ENCODE measurements at regions of chr11 and their contacts with region 1.

Region 1: DNA sequence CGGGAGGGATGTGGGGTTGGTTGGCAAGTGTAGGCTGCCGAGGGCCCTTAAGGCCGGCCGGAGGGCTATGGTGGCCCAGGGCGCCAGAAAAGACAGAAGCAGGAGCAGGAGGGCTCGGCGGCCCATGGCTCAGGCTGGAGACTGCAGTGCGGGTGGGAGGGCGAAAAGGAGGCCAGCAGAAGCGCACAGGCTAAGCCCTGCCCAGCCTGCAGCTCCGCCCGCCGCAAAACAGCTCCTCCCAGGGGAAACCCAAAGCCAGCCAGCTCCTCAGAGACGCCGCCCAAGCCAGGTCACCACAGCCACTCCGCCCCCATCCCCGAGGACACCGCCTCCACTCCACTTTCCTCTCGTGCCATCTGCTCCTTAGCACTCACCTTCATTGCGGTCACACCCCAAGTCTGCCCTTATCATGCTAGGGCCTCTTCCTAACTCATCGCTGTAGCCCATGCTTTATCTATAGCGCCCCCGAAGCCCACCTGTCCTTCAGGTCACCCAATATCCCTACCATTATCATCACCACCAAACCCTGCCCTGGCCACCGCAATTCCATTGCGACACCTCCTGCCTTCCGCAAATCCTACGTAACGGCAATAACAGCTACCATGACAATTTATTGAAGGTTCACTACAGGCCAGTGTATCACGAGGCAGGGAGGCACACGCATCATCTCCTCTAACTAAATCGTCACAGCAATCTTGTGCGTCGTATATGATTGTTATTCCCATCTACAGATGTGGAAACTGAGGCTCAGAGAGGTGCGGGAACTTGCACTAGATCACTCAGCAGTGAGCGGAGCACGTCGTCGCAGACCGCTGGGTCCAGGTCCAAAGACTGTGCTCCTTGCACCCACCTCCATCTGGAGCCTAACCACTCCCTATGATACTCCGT is at the start of gene PRCP:
- DNase-seq: peak; percentile 93 to 94
- ATAC-seq: peak; percentile 93 to 98 (median 96)
- H3K4me3 ChIP-seq: peak within 1 kb of the TSS; percentile 56 to 85 (median 75)
- H3K27ac ChIP-seq: peak within 1 kb of the TSS; percentile 68 to 94 (median 85)
- H3K4me1 ChIP-seq: peaks cover 7 to 50% (median 25%) of the 10 kb centered on the region in 9 donors
- H3K27me3 ChIP-seq: no peaks in the 10 kb centered on the region
- CTCF ChIP-seq: peak in 3 of 9 donors; percentile 8 to 18 (median 10)
- total RNA-seq, gene PRCP: 28.8 to 89.8 (median 41.4) TPM

Region 2: DNA sequence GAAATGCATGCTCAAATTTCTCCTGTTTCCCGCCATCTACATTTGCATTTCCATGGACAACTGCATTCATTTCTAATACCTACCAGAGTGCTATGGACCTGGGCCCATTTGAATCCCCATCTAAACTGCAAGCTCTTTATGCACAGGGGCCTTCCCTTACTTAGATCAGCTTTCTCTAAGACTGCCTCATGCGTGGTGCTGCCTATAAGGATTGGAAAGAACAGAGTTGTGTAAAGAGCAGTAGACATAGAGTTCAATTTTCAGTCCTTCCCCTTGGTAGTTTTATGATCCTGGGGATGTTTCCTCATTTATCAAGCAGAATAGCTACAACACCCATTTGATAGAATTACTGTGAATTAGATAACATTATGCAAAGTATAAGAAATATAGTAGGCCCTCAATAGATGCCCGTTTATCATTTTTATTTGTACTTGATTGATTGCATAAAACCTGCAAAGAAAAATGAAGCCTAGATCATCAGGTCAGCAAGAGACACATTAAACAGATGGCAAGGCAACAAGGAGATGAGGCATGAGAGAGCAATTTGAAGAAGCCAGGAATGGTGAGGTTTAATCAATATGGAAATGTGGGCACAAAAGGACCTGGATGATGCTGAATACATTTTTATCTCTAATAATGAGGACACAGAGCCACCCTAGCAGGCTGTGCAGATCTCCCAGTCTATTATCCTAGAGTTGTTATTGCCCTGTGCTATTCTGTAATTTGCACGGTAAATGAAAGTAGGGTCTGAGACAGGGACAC is 526.6 kb before region 1 on chr11:
- intact Hi-C with region 1: no loop called
- DNase-seq: no peak
- ATAC-seq: no peak
- H3K4me3 ChIP-seq: no peak overlapping the region
- H3K27ac ChIP-seq: no peak overlapping the region
- H3K4me1 ChIP-seq: no peaks in the 10 kb centered on the region
- H3K27me3 ChIP-seq: peaks cover 0 to 6% (median 0%) of the 10 kb centered on the region in 7 donors
- CTCF ChIP-seq: no peak

Region 3: DNA sequence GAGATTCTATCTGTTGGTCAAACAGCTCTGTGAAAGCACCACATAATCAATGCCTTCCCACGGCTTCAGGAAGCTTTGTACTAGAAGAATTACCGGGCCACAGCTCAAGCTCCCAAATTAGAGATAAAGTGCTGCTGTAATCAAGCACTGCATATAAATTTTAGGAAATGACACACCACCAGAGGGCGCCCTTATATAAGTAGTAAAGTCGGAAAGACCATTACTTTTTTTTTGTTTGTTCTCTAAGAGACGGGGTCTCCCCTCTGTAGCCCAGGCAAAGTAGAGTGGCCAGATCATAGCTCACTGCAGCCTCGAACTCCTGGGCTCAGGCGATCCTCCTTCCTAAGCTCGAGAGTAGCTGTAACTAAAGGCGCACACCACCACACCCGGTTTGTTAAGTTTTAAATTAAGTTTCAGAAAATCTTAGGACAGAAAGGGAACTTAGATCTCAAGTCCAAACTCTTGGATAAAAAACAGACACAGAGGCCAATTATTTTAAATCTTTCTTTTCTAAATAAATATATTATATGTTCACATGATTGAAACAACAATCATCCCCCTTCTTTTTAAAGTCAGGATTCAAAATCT is 32.9 kb before region 1 on chr11:
- intact Hi-C with region 1: loop called in 5 of 10 experiments (anchors 5 kb)
- DNase-seq: peak in 1 of 2 donors; percentile 89
- ATAC-seq: peak in 7 of 8 donors; percentile 22 to 74 (median 56)
- H3K4me3 ChIP-seq: peak overlapping the region in 6 of 10 donors; percentile 19 to 38 (median 32)
- H3K27ac ChIP-seq: peak overlapping the region in 2 of 10 donors; percentile 16 to 48
- H3K4me1 ChIP-seq: peaks cover 0 to 69% (median 29%) of the 10 kb centered on the region in 9 donors
- H3K27me3 ChIP-seq: no peaks in the 10 kb centered on the region
- CTCF ChIP-seq: peak; percentile 55 to 87 (median 74)

Region 4: GRCh38 chr11:83071567-83072349 is 171.2 kb after region 1 on chr11 and contains the start of gene RAB30:
- intact Hi-C with region 1: loop called in 6 of 10 experiments (anchors 5 to 10 kb)
- DNase-seq: peak; percentile 87 to 99
- ATAC-seq: peak; percentile 97 to 99 (median 98)
- H3K4me3 ChIP-seq: peak within 1 kb of the TSS; percentile 60 to 89 (median 74)
- H3K27ac ChIP-seq: peak within 1 kb of the TSS; percentile 71 to 95 (median 92)
- H3K4me1 ChIP-seq: peaks cover 2 to 65% (median 48%) of the 10 kb centered on the region in 9 donors
- H3K27me3 ChIP-seq: peaks cover 0 to 12% (median 0%) of the 10 kb centered on the region in 7 donors
- CTCF ChIP-seq: no peak
- total RNA-seq, gene RAB30: 20.2 to 29.4 (median 22.0) TPM

Region 5: DNA sequence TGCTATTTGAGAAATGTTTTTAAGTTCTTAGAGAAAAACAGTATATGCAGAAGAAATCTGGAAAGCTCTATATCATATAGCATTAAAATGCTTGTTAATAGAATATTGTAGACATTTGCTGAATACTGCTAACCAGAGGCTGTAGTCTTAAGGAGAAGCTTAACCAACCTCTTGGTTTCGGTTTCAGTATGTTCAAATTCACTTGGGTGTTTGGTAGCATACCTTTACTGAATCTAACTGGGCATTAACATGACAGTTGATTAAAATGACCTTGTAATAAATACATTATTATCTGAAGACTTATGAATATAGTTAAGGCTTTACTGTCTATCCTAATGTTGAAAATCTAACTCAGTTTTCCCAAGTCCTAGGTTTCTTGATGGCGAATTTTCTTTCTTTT is 261.9 kb after region 1 on chr11:
- intact Hi-C with region 1: loop called in 5 of 10 experiments (anchors 1 to 10 kb)
- DNase-seq: no peak
- ATAC-seq: no peak
- H3K4me3 ChIP-seq: peak overlapping the region in 1 of 10 donors; percentile 86
- H3K27ac ChIP-seq: peak overlapping the region in 3 of 10 donors; percentile 4 to 28 (median 22)
- H3K4me1 ChIP-seq: peaks cover 0 to 63% (median 44%) of the 10 kb centered on the region in 9 donors
- H3K27me3 ChIP-seq: no peaks in the 10 kb centered on the region
- CTCF ChIP-seq: no peak

Region 6: DNA sequence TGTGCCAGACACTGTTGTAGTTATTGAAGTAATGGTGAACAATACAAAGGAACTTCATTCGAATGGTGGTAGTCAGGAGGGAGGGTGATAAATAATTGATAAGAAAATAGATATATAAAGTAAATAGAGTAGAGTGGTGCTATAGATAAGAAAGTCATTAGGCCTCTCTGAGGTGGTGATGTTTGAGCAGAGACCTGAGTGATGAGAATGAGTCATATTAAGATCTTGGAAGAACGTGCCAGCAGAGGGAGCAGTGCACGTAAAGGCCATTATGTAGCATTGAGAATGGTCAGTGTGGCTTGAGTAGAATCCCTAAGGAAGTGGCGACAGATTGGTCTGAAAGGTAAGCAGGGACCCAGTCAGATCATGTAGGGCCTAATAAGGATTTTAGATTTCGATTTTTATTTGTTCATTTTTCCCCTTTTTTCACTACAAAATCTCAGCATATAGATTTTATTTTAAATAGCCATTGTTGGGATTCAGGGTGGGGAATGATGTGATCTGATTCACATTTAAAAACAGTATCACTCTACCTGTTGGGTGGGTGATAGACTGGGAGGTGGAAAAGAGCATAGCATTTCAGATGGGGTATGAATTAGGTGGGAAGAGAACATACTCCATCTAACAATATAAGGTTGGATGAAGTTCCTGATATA is 340.9 kb after region 1 on chr11:
- intact Hi-C with region 1: loop called in 2 of 10 experiments (anchors 5 to 10 kb)
- DNase-seq: peak in 1 of 2 donors; percentile 19
- ATAC-seq: peak in 4 of 8 donors; percentile 62 to 85 (median 74)
- H3K4me3 ChIP-seq: no peak overlapping the region
- H3K27ac ChIP-seq: no peak overlapping the region
- H3K4me1 ChIP-seq: peaks cover 0 to 3% (median 0%) of the 10 kb centered on the region in 9 donors
- H3K27me3 ChIP-seq: no peaks in the 10 kb centered on the region
- CTCF ChIP-seq: peak in 8 of 9 donors; percentile 16 to 65 (median 58)

Region 7: GRCh38 chr11:83285771-83286528 is 385.4 kb after region 1 on chr11 and contains the start of gene CCDC90B:
- intact Hi-C with region 1: loop called in 1 of 10 experiments (anchors 10 kb)
- DNase-seq: peak; percentile 91 to 97
- ATAC-seq: peak; percentile 97 to 99 (median 98)
- H3K4me3 ChIP-seq: peak within 1 kb of the TSS; percentile 56 to 90 (median 80)
- H3K27ac ChIP-seq: peak within 1 kb of the TSS; percentile 87 to 99 (median 96)
- H3K4me1 ChIP-seq: peaks cover 0 to 42% (median 35%) of the 10 kb centered on the region in 9 donors
- H3K27me3 ChIP-seq: no peaks in the 10 kb centered on the region
- CTCF ChIP-seq: peak in 4 of 9 donors; percentile 38 to 56 (median 47)
- total RNA-seq, gene CCDC90B: 22.3 to 34.3 (median 28.2) TPM

Region 8: GRCh38 chr11:83827940-83828554 is 927.5 kb after region 1 on chr11:
- intact Hi-C with region 1: loop called in 1 of 10 experiments (anchors 10 kb)
- DNase-seq: no peak
- ATAC-seq: peak in 2 of 8 donors; percentile 30 to 54
- H3K4me3 ChIP-seq: peak overlapping the region in 5 of 10 donors; percentile 8 to 35 (median 30)
- H3K27ac ChIP-seq: no peak overlapping the region
- H3K4me1 ChIP-seq: no peaks in the 10 kb centered on the region
- H3K27me3 ChIP-seq: no peaks in the 10 kb centered on the region
- CTCF ChIP-seq: peak in 7 of 9 donors; percentile 45 to 63 (median 58)